ENCODE measurements at regions of chr14 and their contacts with region 1.

Region 1: DNA sequence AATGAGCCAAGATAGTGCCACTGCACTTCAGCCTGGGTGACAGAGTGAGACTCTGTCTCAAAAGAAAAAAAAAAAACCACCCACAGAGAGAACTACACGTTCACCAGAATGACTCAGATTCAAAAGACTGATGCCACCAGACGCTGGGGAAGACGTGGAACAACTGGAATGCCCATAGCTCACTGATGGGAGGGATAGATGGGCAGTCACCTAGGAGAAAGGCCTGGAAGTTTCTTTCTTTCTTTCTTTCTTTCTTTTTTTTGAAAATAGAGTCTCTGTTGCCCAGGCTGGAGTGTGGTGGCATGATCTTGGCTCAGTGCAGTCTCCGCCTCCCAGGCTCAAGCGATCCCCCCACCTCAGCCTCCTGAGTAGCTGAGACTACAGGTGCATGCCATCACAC is 10.0 kb upstream of the KLC1 start:
- DNase-seq: peak in 1 of 2 experiments; percentile 40
- H3K4me3 ChIP-seq: no peak overlapping the region
- H3K27ac ChIP-seq: no peak overlapping the region
- H3K4me1 ChIP-seq: peaks cover 7% of the 10 kb centered on the region
- H3K27me3 ChIP-seq: no peaks in the 10 kb centered on the region
- CTCF ChIP-seq: no peak

Region 2: DNA sequence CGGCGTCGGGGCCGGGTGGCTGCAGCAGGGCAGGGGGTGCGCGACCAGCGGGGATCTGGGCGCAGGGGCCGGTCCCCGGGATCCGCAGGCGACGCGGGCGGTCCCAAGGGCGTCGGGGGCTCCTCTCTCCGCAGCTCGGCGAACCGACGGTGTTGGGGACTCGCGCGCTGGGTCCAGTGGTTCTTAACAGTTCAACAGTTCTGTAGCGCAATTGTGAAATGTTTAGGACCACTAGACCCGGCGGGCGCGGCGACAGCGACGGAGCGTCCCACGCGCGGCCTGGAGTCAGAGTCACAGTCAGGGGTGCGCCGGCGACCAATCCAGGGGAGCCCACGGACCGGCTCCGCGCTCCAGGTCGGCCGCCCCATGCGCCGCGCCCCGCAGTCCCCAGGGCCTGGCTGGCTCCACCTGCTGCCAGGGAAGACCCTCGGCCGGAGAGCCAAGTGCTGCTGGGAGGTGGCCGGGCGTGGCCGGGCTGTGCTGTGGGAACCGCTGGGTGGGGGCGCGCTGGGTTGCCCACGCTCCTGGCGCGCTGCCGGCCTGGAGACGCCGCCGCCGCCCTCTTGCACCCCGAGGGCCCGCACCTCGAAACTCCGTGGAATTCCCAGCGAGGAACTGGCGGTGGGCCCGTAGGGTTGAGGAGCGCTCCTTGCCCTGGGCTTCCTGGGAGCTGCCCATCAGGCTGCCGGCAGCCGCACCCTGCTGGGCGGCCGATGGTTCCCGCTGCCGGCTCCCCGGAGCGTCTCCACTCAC is 498.4 kb after region 1 on chr14:
- CTCF ChIA-PET with region 1: no interaction called
- POLR2A ChIA-PET with region 1: interaction called, 10 read pairs
- intact Hi-C with region 1: no loop called
- DNase-seq: no peak
- H3K4me3 ChIP-seq: peak overlapping the region; percentile 92; the same call in 1 of the 2 replicates
- H3K27ac ChIP-seq: no peak overlapping the region
- H3K4me1 ChIP-seq: peaks cover 7% of the 10 kb centered on the region
- H3K27me3 ChIP-seq: peaks cover 14% of the 10 kb centered on the region
- CTCF ChIP-seq: no peak

Measured in PC-9 (cell line).